Dorsolateral prefrontal cortex (tissue), 120 donors: ENCODE measurements at regions of chr7 and their contacts with region 1.

Region 1: GRCh38 chr7:43454936-43455518 is 127.9 kb upstream of the STK17A start:
- DNase-seq: no peak
- H3K4me3 ChIP-seq: peak overlapping the region in 16 of 59 donors; percentile 2 to 34 (median 17)
- H3K27ac ChIP-seq: peak overlapping the region in 2 of 59 donors; percentile 9 to 33
- H3K27me3 ChIP-seq: no peaks in the 10 kb centered on the region
- CTCF ChIP-seq: peak; percentile 32 to 75 (median 59)

Region 2: DNA sequence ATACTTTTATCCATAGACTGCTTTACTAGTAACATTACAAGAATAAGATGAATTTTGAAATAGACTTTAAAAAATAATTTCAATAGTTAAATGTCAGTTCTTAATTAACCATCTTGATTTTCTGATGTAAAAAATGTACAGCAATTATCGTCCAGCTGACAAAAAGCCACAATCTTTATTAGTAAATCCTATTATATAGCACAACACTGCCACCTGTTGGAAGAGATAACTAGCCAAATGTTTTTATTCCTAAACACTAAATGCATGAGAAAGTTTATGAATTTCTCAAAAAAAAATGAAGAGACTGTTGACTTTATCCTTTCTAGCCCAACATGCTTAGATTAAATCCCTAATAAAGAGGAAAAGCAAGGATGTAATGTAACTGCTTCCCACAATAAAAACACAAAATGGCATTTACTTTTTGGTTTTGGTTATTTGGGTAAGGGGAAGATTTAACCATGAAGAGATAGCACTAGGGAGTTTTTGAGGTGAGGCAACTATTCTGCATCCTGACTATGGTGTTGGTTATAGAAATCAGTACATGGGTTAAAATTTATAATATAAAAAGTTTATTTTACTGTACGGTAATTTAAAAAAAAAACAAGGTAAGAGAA is 266.3 kb after region 1 on chr7:
- intact Hi-C with region 1: loop called in 1 of 2 experiments (anchors 5 kb)
- DNase-seq: no peak
- H3K4me3 ChIP-seq: no peak overlapping the region
- H3K27ac ChIP-seq: no peak overlapping the region
- H3K27me3 ChIP-seq: no peaks in the 10 kb centered on the region
- CTCF ChIP-seq: peak; percentile 48 to 88 (median 75)